Activated naive CD8-positive, alpha-beta T cell treated with anti-CD3 and anti-CD28 coated beads, Interleukin-2, amount 10 ng/mL, durations not matched to agents 7 days and 5 days (primary cell): ENCODE measurements at regions of chr5 and their contacts with region 1.

Region 1: DNA sequence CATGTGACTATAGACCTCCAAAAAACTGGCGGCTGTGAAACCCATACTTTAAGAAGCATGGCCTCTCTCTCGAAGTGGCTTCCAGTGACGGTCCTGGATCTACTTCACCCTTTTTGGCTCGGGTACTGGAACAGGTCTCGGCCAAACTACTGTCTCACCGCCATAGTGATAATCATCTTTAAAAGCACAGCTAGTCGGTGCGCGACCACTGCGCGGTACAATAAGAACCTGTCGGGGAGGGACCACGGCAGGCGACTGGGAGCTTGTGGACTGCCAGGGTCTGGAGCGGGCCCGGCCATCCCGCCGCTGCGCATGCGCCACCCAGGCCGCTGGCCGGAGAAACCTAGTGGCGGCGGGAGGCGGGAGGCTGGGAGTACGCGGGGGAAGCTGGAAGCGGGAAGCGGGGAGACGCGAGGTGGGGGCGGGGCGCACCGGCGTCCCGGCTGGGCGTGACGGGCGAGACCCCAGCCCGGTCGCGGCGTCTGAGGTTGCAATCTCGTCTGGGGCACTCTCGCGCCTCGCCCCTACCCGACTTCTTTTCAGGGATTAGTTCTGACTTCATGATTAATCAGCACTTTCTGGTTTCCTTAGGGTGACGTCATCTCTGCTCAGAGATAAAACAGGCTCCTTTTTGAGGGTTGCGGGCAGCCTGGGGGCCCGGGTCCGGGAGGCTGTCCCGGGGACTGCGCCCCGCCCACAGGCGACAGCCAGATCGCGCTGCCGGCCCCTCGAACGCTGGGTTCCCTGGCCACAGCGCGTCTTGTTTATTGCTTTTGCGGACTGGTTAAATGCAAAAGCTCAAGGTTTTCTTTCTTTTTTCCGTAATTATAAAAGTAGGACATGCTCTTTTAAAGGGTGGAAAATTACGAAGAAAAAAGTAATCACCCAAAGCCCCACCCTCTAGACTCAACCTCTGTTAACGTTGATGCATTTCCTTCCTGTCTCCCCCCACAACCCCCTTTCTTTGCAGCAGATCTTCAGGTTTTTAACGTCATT is 266.8 kb downstream of the CWC27 start:
- DNase-seq: peak; percentile 85
- ATAC-seq: peak; percentile 87
- H3K4me3 Mint-ChIP-seq: peak overlapping the region; percentile 77
- H3K27ac Mint-ChIP-seq: peak overlapping the region; percentile 98
- H3K4me1 Mint-ChIP-seq: peaks cover 30% of the 10 kb centered on the region
- H3K27me3 Mint-ChIP-seq: no peaks in the 10 kb centered on the region

Region 2: DNA sequence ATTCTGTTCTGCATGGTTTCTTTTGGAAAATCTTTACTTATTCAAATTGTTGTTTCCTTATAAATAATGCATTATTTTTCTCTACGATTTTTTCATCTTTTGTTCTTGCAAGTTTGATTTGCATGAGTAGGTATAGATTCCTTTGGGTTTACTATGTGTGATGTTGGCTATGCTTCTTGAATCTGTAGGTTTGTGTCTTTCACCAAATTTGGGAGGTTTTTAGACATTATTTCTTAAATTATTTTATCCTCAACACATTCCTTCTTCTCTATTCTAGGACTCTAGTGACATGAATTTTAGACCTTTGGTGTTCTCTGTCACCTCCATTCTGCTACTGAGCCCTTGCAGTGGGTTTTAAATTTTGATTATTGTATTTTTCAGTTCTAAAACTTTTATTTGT is 47.7 kb before region 1 on chr5:
- POLR2A ChIA-PET with region 1: no interaction called
- DNase-seq: no peak
- ATAC-seq: no peak
- H3K4me3 Mint-ChIP-seq: no peak overlapping the region
- H3K27ac Mint-ChIP-seq: no peak overlapping the region
- H3K4me1 Mint-ChIP-seq: peaks cover 8% of the 10 kb centered on the region
- H3K27me3 Mint-ChIP-seq: no peaks in the 10 kb centered on the region

Region 3: DNA sequence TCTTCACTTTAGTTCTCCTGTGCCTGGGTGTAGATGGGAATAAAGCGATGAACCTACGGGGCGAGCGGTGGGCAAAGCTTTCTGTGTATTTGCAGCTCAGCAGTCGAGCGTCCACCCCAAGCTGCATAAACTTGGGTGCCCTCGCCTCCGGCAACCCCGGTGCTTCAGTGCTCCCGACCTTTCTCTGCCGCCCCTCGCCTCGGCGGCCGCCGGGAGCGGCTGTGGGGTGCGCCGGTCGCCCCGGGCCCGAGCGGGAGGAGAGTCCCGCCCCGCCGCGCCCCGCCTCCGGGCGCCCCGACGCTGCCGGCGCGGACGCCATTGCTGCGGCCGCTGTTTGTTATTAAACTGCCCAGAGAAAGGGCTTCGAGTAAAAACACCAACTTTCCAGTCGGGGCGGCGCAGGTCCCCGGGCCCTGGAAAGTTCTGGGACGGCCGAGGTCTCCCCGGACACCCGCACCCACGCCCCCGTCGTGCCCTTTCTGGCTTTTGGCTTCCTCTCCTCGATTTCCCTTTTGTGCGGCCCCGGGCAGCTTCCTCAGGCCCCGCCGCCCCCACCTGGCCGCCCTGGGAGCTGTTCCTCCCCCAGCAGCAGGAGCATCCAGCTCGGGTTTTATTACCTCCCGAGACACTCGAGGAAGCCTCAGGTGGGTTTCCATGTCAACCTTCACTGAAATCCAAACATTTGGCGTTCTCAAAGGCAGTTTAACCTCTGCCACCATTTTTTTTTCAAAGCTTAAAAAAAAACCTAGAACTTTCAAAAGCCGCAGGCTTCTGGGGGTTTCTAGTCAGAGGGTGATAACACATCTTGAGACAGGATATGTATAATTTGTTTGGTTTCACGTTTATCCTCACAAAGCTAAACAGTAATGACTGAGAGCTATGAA is 67.6 kb after region 1 on chr5:
- POLR2A ChIA-PET with region 1: interaction called, 18 read pairs
- DNase-seq: peak; percentile 72
- ATAC-seq: peak; percentile 76
- H3K4me3 Mint-ChIP-seq: peak overlapping the region; percentile 80
- H3K27ac Mint-ChIP-seq: peak overlapping the region; percentile 79
- H3K4me1 Mint-ChIP-seq: peaks cover 36% of the 10 kb centered on the region
- H3K27me3 Mint-ChIP-seq: no peaks in the 10 kb centered on the region